ENCODE measurements at regions of chr1 and their contacts with region 1.

Region 1: DNA sequence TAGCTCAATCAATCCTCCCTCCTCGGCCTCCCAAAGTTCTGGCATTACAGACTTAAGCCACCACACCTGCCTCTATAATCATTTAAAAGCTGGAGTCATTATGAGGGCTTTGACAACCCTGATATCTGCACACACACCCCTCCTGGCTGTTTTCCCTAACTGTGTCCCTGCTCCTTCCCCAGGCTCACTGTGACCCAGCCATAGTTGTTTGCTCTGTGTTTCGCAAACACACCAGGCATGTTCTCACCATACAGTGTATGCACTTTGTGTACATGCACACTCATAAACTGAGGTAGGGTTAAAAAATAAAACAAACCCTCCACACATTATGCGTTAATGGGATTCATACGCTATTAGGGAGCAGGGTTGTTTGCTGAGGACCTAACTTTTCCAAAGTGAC is 21.8 kb upstream of the IL20 start:
- DNase-seq: no peak
- H3K4me3 Mint-ChIP-seq: no peak overlapping the region
- H3K27ac Mint-ChIP-seq: no peak overlapping the region
- H3K4me1 Mint-ChIP-seq: peaks cover 3% of the 10 kb centered on the region
- H3K27me3 Mint-ChIP-seq: no peaks in the 10 kb centered on the region

Region 2: GRCh38 chr1:206826405-206826804 is 17.2 kb before region 1 on chr1:
- CTCF ChIA-PET with region 1: no interaction called
- intact Hi-C with region 1: loop called (anchors 2 kb)
- DNase-seq: no peak
- H3K4me3 Mint-ChIP-seq: no peak overlapping the region
- H3K27ac Mint-ChIP-seq: no peak overlapping the region
- H3K4me1 Mint-ChIP-seq: peaks cover 26% of the 10 kb centered on the region
- H3K27me3 Mint-ChIP-seq: no peaks in the 10 kb centered on the region